Activated CD8-positive, alpha-beta memory T cell treated with anti-CD3 and anti-CD28 coated beads, Interleukin-2, amount 10 ng/mL, durations not matched to agents 7 days and 5 days (primary cell): ENCODE measurements at regions of chr5 and their contacts with region 1.

Region 1: DNA sequence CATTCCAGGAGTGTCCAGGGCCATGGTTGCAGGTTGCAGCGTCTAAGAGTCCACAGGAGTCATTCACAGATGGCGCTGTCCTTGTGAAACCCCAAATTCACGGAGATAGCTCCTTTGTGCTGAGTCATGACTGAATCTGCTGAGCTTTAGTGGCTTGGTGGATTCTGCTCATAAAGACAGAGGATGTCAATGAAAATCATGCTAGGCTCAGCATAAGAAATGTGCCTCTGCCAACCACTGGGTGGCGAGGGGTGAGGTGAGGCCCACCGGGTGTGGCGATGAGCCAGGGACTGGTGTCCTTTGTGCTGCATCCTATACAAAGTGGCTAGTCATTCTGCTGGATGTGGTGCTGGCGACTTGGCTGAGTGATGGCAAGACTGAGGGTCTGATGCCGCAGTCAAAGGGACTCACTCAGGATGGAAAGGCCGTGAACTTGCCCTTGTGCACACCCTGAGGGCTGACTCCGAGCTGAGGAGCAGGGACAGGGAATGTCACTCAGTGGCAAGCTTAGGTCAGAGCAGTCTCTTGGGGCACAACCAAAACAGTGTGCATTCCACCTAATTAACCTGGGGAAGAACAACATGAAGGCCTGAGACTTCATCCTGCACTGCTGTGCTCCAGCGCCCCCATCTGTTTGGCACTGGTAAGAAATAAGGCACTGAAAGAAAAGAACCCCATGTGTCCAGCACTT is 71.5 kb downstream of the DAP start:
- DNase-seq: peak; percentile 58
- ATAC-seq: peak; percentile 58
- H3K4me3 Mint-ChIP-seq: no peak overlapping the region
- H3K27ac Mint-ChIP-seq: no peak overlapping the region
- H3K4me1 Mint-ChIP-seq: peaks cover 12% of the 10 kb centered on the region
- H3K27me3 Mint-ChIP-seq: no peaks in the 10 kb centered on the region

Region 2: DNA sequence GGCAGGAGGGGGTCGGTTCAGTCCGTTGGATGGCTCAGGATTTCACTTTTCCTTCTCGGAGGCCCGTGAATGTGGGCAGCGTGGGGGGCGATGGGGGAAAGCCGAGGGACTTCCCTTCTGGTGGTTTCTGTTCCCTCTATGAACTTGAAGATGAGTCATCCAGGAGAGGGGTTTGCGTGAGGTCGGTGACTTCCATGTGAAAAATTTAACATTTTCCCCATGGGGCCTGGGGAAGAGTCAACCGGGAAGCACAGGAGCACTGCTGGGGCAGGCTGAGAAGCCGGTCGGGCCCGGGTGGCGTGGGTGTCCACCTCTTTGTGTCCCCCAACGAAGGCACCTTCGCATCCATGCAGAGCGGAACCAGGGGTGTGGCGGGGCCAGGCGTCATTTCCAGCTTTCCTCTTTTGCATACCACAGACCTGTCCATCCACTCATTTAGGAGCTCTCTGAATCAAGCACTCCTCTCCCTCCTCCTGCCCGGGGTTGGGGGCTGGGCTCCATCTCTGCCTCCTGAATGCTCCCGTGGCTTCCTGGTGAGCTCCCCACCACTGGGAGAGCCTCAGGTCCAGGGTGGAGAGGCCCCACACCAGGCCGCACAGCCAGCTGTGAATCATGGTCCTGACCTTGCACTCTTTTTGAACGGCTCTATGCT is 57.3 kb before region 1 on chr5:
- CTCF ChIA-PET with region 1: interaction called, 13 read pairs
- DNase-seq: peak; percentile 80
- ATAC-seq: peak; percentile 13
- H3K4me3 Mint-ChIP-seq: peak overlapping the region; percentile 60
- H3K27ac Mint-ChIP-seq: peak overlapping the region; percentile 83
- H3K4me1 Mint-ChIP-seq: peaks cover 82% of the 10 kb centered on the region
- H3K27me3 Mint-ChIP-seq: peaks cover 2% of the 10 kb centered on the region